Right cardiac atrium (tissue), 5 donors: ENCODE measurements at regions of chr1 and their contacts with region 1.

Region 1: DNA sequence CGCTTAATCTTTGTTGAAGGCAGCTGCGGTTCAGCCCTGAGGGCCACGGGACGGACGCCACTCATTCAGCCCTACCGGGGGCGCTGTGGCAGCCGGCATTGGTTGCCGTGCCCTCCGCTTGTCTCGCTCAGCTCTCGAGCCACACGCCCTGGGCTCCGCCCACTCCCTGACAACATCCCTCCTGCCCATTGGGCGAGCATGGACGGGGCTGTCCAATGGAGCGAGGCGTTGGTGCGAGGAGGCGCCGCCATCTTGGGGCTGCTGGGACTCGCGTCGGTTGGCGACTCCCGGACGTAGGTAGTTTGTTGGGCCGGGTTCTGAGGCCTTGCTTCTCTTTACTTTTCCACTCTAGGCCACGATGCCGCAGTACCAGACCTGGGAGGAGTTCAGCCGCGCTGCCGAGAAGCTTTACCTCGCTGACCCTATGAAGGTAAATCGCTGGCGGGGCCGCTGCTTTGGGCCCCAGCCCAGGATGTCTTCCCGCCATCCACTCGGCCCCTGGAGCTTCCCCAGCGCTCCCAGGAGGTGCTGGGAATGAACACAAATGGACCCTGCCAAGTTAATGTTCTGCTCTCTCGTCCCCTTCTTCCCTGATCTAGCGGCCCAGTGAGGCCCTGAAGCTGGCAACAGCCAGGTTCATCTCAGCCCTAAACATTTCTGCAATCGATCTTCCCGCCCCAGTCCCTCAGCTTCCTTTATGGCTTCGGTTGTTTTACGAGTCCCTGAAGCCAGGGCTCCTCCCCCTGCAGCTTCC is at the start of gene SRP9:
- DNase-seq: peak; percentile 99 to 100 (median 100)
- ATAC-seq: peak; percentile 100
- H3K4me3 ChIP-seq: peak within 1 kb of the TSS; percentile 81
- H3K27ac ChIP-seq: peak within 1 kb of the TSS; percentile 97
- H3K4me1 ChIP-seq: peaks cover 1% of the 10 kb centered on the region
- H3K27me3 ChIP-seq: no peaks in the 10 kb centered on the region
- total RNA-seq, gene SRP9: 193 to 245 (median 219) TPM

Region 2: DNA sequence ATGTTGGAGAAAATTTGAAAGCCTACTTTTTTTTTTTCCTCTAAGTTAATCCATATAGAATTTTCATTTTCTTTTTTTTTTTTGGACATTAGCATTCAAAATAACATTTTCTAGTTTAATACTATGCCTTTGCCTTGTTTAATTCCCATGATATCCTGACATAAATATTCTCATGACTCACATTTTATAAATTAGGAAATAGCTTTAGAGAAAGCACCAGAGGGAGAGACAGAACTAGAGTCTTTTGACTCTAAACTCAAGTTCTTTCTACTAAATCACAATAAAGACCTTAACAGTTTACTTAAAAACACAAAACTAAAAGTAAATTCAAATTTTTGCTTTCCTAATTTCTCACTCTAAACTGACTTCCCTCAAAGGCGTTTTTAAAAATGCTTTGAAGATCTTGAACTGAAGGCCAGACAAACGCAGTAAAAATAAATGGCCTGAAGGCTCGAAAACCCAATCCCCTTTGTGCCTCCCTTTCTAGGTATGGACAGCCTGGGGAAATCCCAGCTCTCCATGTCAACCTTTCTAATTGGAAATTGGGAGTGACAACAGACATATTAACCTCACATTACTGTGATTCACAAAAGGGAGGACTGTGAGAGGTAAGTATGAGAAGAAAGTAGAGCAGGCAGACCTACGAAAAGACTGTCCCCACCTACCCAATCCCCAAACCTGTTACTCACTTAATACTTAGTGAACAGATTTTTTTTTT is 229.5 kb before region 1 on chr1:
- intact Hi-C with region 1: loop called in 1 of 4 experiments (anchors 10 kb)
- DNase-seq: no peak
- ATAC-seq: no peak
- H3K4me3 ChIP-seq: no peak overlapping the region
- H3K27ac ChIP-seq: no peak overlapping the region
- H3K4me1 ChIP-seq: peaks cover 2% of the 10 kb centered on the region
- H3K27me3 ChIP-seq: no peaks in the 10 kb centered on the region

Region 3: DNA sequence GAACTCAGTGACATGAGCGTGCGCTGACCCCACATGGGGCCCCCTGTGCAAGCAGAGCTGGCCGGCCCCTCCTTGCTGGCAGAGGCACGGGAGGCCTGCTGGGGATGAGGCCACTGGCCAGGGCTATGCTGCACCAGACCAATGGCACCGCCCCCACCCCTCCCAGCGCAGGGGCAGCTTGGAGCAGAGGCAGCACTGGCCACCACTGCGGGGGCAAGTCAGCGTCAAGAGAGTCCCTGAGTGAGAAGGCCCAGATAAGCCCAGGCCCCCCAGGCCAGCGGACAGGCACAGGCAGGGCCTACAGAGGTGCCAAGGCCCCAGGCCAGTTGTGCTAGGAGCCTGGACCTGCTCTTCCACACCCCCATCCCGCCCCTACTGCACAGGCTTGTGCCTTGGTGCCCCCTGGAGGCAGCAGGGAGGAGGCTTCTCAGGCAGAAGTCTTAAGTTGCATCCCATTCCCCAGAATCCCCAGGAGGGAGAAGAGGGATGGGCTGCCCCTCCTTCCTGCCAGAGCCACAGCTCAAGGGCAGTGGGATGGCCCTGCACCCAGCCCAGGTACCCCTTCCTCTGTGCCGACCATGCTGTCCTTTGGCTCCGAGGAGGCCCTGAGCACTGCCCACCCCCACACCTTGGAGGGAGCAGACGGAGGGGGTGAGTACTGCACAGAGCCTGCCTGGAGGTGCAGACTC is 68.0 kb after region 1 on chr1:
- intact Hi-C with region 1: loop called in 1 of 4 experiments (anchors 10 kb)
- DNase-seq: peak; percentile 88 to 94 (median 91)
- ATAC-seq: peak; percentile 78 to 82
- H3K4me3 ChIP-seq: no peak overlapping the region
- H3K27ac ChIP-seq: no peak overlapping the region
- H3K4me1 ChIP-seq: no peaks in the 10 kb centered on the region
- H3K27me3 ChIP-seq: no peaks in the 10 kb centered on the region

Region 4: GRCh38 chr1:225896937-225897549 is 119.3 kb after region 1 on chr1:
- intact Hi-C with region 1: no loop called
- DNase-seq: peak in 1 of 3 donors; percentile 17
- ATAC-seq: peak; percentile 37 to 64
- H3K4me3 ChIP-seq: no peak overlapping the region
- H3K27ac ChIP-seq: no peak overlapping the region
- H3K4me1 ChIP-seq: peaks cover 2% of the 10 kb centered on the region
- H3K27me3 ChIP-seq: no peaks in the 10 kb centered on the region

Region 5: DNA sequence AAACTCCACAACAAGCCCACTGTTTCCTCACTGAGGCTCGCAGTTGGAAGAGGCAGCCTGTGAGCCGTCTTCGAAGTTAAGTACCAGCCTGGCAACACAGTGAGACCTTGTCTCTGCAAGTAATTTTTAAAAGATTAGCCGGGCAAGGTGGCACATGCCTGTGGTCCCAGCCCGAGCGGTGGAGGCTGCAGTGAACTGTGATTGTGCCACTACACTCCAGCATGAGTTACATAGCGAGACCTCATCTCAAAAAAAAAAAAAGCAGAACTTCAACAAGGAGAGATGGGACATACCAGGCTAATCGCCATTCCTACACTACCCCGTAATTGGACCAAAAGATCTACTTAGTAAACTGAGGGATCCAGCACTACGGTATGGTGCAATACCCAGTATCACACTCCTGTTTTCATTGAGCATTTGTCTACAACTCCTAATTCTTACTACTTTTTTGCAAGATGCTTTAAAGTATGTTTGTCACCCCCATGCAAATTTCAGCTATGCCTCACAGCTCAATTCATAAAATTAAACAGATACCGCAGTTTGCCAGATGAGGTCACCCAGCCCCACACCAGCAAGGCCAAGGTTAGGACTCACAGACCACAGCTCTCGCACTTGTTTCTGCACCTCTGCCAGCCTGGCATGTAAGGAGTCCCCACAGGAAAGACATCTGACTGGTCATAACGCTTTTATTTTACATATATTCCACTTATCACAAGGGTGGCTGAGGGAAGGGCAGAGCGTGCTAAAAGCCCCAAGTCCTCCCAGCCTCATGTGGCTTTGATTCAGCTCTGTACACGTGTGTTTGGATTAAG is 200.4 kb after region 1 on chr1:
- intact Hi-C with region 1: loop called in 2 of 4 experiments (anchors 5 to 10 kb)
- DNase-seq: no peak
- ATAC-seq: no peak
- H3K4me3 ChIP-seq: no peak overlapping the region
- H3K27ac ChIP-seq: no peak overlapping the region
- H3K4me1 ChIP-seq: no peaks in the 10 kb centered on the region
- H3K27me3 ChIP-seq: no peaks in the 10 kb centered on the region

Region 6: DNA sequence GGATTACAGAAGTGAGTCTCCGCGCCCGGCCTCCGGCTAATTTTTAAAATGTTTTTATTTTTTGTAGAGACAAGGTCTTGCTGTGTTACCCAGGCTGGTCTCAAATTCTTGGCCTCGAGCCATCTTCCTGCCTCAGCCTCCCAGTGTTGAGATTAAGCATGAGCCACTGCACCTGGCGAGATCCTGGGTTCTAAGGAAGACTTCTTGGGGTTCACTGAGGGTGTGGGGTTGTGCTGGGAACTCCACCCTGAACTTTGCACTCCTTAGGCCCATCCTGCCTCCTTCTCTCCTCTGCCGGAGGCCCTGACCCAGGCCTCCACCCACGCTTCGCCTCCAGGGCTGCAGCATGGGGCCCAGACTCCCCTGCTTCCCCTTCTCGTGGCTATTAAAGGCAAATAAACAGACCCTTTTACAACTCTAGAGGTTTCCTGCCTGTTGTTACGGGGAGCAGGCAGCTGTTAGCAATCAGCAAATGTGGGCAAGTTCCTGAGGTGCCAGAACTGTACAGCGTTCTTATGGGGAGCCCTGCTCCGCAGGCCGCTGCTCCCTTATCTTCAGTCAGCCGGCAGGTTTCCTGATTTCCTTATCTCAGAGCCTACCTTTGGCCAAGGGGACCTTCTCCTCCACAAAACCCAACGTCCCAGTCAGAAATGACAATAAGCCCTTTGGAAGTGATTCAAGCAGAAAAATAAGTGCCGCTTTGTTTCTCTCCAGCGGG is 572.2 kb after region 1 on chr1:
- intact Hi-C with region 1: no loop called
- DNase-seq: no peak
- ATAC-seq: peak in 1 of 2 donors; percentile 28
- H3K4me3 ChIP-seq: no peak overlapping the region
- H3K27ac ChIP-seq: no peak overlapping the region
- H3K4me1 ChIP-seq: no peaks in the 10 kb centered on the region
- H3K27me3 ChIP-seq: no peaks in the 10 kb centered on the region